AG04450 (cell line): ENCODE measurements at regions of chr1 and their contacts with region 1.

Region 1: GRCh38 chr1:220294846-220295301 is 22.6 kb upstream of the RAB3GAP2 start:
- DNase-seq: no peak
- H3K4me3 ChIP-seq: no peak overlapping the region
- H3K27ac ChIP-seq: no peak overlapping the region
- H3K27me3 ChIP-seq: peaks cover 3% of the 10 kb centered on the region
- CTCF ChIP-seq: no peak

Region 2: GRCh38 chr1:220045356-220046051 is 249.4 kb before region 1 on chr1:
- CTCF ChIA-PET with region 1: no interaction called
- POLR2A ChIA-PET with region 1: no interaction called
- DNase-seq: no peak
- H3K4me3 ChIP-seq: peak overlapping the region; percentile 100
- H3K27ac ChIP-seq: peak overlapping the region; percentile 91
- H3K27me3 ChIP-seq: no peaks in the 10 kb centered on the region
- CTCF ChIP-seq: no peak

Region 3: GRCh38 chr1:220281159-220281574 is 13.7 kb before region 1 on chr1:
- CTCF ChIA-PET with region 1: interaction called, 84 read pairs
- POLR2A ChIA-PET with region 1: interaction called, 4 read pairs
- DNase-seq: no peak
- H3K4me3 ChIP-seq: no peak overlapping the region
- H3K27ac ChIP-seq: no peak overlapping the region
- H3K27me3 ChIP-seq: peaks cover 18% of the 10 kb centered on the region
- CTCF ChIP-seq: peak; percentile 72